Thyroid gland (tissue), 4 donors: ENCODE measurements at regions of chr1 and their contacts with region 1.

Region 1: DNA sequence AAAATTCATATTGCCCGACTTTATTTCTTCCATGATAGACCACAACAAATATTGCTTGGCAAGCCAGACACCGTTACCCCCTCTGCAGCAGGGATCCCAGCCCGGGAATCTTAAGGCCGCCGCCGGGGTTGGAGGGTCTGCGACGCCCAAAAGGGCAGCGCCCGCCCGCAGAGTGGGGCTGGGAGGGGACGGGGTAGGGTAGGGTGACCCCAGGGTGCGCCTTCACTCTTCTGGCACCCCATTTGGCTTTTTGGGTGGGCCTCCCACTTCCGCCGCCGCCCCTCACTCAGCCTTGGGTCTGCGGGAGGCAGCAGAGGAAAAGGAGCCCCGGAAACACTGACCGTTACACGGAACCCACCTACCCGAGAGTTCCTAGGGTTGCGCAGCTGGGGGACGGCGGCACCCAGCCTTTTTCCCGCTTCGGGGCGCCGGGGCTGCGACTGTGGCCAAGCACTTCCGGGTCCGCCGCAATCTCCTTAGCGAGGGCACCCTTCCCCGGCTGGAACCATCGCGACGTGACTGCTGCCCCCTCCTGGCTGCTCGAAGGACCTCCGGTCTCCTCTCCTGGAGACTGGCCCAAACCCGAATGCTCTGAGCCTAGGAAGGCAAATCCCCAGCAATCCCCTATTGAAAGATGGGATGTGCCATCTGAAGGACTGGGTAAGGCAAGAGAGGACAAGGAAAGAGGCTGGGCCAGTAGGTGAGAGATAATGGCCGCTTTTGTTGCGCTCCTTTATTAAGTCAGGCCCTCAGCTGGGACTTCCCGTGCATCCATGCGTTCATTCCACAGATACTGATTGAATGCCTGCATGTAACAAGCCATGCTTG is at the start of gene PIGC:
- DNase-seq: peak; percentile 86 to 90
- H3K4me3 ChIP-seq: peak within 1 kb of the TSS; percentile 33 to 90 (median 52)
- H3K27ac ChIP-seq: peak within 1 kb of the TSS in 2 of 3 donors; percentile 73 to 78
- H3K4me1 ChIP-seq: peaks cover 5 to 14% of the 10 kb centered on the region in 2 donors
- H3K27me3 ChIP-seq: no peaks in the 10 kb centered on the region
- CTCF ChIP-seq: peak; percentile 31 to 87 (median 79)
- POLR2A ChIP-seq: no peak
- total RNA-seq, gene PIGC: 19.4 to 23.4 (median 20.9) TPM

Region 2: GRCh38 chr1:172002725-172003345 is 441.0 kb before region 1 on chr1:
- intact Hi-C with region 1: loop called (anchors 10 kb)
- DNase-seq: peak; percentile 10 to 11
- H3K4me3 ChIP-seq: no peak overlapping the region
- H3K27ac ChIP-seq: no peak overlapping the region
- H3K4me1 ChIP-seq: no peaks in the 10 kb centered on the region
- H3K27me3 ChIP-seq: no peaks in the 10 kb centered on the region
- CTCF ChIP-seq: peak in 5 of 6 experiments; percentile 34 to 76 (median 61)
- POLR2A ChIP-seq: no peak

Region 3: DNA sequence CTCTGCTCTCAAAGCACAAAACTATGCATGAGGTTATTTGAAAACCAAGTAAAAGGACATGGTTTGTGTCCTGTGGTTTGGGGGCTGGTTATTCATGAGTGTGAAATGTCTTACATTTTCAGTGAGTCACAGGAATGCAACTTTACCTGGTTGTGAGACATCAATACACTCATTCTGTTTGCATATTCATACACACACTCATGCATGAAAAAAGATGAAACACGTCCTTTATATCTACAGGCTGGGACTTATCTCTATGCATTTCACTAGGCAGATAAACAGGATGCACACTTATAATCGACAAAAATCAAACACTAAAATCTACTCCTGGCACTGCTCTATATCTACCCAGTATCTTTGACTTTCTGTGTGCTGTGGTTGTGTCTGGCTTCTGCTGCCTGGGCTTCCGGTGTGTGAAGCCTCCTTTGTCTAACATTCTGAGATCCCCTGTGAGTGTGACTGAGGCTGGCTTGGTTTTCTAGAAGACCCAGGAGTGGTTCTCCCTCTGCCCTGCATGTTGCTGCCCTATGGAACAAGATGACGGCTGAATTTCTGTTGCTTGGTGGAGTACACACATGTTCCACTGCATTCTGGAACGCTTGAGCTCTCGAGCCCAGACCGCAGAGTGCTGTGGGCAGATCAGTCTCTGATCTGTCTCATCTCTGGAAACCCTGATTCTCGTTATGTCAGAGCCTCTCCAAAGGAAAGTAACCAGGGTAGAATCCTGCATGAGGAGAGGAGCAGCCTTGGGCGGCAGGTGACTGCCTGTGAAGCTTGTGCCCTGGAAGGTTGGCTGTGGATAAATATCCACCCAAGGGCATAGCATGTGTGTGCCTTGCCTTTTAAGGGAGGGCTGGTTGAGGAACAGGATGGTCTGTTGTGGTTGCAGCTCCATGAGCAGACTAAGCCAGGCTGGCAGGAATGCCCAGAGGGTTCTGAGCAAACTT is 195.3 kb after region 1 on chr1:
- intact Hi-C with region 1: no loop called
- DNase-seq: no peak
- H3K4me3 ChIP-seq: no peak overlapping the region
- H3K27ac ChIP-seq: no peak overlapping the region
- H3K4me1 ChIP-seq: no peaks in the 10 kb centered on the region
- H3K27me3 ChIP-seq: no peaks in the 10 kb centered on the region
- CTCF ChIP-seq: no peak
- POLR2A ChIP-seq: no peak

Region 4: GRCh38 chr1:172719694-172720138 is 275.9 kb after region 1 on chr1:
- intact Hi-C with region 1: loop called (anchors 10 kb)
- DNase-seq: no peak
- H3K4me3 ChIP-seq: no peak overlapping the region
- H3K27ac ChIP-seq: no peak overlapping the region
- H3K4me1 ChIP-seq: no peaks in the 10 kb centered on the region
- H3K27me3 ChIP-seq: no peaks in the 10 kb centered on the region
- CTCF ChIP-seq: peak in 5 of 6 experiments; percentile 28 to 93 (median 58)
- POLR2A ChIP-seq: no peak